ENCODE measurements at regions of chr19 and their contacts with region 1.

Region 1: GRCh38 chr19:35404879-35405622 is 34.2 kb downstream of the GPR42 start:
- DNase-seq: peak; percentile 20
- H3K4me3 Mint-ChIP-seq: no peak overlapping the region
- H3K27ac Mint-ChIP-seq: peak overlapping the region; percentile 80
- H3K4me1 Mint-ChIP-seq: peaks cover 22% of the 10 kb centered on the region
- H3K27me3 Mint-ChIP-seq: peaks cover 11% of the 10 kb centered on the region

Region 2: GRCh38 chr19:35375505-35376307 is 29.3 kb before region 1 on chr19:
- intact Hi-C with region 1: loop called (anchors 1 kb)
- DNase-seq: no peak
- H3K4me3 Mint-ChIP-seq: no peak overlapping the region
- H3K27ac Mint-ChIP-seq: no peak overlapping the region
- H3K4me1 Mint-ChIP-seq: peaks cover 16% of the 10 kb centered on the region
- H3K27me3 Mint-ChIP-seq: peaks cover 9% of the 10 kb centered on the region

Region 3: DNA sequence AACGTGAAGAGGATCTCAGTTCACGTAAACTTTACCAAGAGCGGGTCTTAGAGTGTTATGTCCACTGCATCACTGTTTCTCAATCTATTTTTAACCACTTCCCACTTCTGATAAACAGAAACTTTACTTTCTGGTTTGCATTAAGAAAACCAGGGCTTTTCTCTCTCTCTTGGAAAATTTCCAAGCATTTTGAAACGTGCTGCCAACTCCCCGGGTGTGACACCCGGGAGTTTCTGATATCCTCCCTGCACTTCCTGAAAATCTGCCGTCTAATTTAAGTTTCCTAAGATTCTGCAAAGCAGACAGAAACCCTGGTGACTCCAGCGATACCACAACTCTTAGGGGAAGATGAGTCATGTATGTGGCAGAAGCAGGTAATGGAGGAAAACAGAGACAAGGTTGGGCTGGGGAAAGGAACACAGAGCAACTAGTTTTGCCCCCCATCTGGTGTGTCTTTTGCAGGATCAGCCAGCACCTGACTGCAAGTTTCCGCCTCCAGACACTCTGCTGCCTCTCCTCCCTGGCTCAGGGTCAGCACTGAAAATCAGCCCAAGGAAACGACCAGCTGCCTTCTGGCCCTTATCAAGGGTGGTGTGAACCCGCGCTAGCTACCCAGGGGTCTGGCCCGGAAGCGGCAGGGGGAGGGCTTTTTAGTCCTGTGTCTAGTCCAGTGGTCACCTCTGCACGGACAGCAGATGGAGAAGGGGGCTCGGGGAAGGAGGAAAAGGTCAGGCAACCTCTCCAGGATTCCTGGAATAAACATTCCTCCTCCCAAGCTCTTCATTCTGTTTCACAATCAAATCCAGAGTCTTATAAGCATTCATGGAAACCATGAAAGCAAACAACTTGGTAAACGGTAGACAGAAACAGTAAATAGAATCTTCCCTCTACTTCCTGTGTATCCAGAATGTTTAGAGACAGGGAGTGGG is 31.7 kb after region 1 on chr19:
- intact Hi-C with region 1: loop called (anchors 1 kb)
- DNase-seq: no peak
- H3K4me3 Mint-ChIP-seq: peak overlapping the region; percentile 42
- H3K27ac Mint-ChIP-seq: peak overlapping the region; percentile 44
- H3K4me1 Mint-ChIP-seq: peaks cover 20% of the 10 kb centered on the region
- H3K27me3 Mint-ChIP-seq: peaks cover 26% of the 10 kb centered on the region

Region 4: GRCh38 chr19:35462476-35462953 is 57.5 kb after region 1 on chr19:
- intact Hi-C with region 1: loop called (anchors 1 kb)
- DNase-seq: peak; percentile 60
- H3K4me3 Mint-ChIP-seq: peak overlapping the region; percentile 60
- H3K27ac Mint-ChIP-seq: peak overlapping the region; percentile 88
- H3K4me1 Mint-ChIP-seq: peaks cover 45% of the 10 kb centered on the region
- H3K27me3 Mint-ChIP-seq: peaks cover 4% of the 10 kb centered on the region

Measured in activated T-helper 2 cell treated with anti-CD3 and anti-CD28 coated beads, Interferon-gamma antibody, Interleukin-2, Interleukin-4, amounts not matched to agents 10 μg/mL and 5 μg/mL and 100 μg/mL, durations not matched to agents 14 hours and 24 hours and 36 hours (primary cell).